ENCODE measurements at regions of chr10 and their contacts with region 1.

Region 1: DNA sequence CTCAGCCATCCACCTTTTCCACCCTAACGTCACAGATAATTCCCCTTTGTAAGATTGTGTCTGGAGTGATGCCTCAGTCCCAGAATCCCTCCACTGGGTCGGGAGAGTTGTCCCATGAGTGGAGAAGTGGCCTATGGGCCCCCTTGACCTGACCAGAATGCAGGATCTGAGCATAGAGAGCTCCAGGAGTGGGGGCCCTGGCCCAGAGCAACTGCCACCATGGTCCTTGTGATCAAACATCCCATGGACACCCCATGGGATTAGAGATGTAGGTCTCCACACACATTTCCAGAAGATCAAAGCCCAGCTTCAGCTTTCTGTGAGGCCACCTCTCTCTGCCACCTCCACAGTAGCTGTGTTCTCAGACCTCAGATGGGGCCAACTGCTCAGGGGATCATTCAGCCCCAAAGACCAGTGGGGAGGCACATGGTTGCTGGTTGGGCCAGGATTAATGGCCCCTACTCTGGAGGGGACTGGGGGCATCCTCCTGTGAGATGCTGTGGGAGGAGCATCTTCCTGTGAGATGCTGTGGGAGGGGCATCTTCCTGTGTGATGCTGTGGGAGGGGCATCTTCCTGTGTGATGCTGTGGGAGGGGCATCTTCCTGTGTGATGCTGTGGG is 28.5 kb upstream of the DPYSL4 start:
- DNase-seq: peak in 8 of 9 donors; percentile 51 to 71 (median 65)
- ATAC-seq: peak; percentile 58
- H3K4me3 ChIP-seq: no peak overlapping the region
- H3K4me3 Mint-ChIP-seq: peak overlapping the region in 4 of 10 donors; percentile 14 to 64 (median 30)
- H3K27ac ChIP-seq: peak overlapping the region; percentile 72
- H3K27ac Mint-ChIP-seq: peak overlapping the region in 8 of 9 donors; percentile 76 to 100 (median 95)
- H3K4me1 ChIP-seq: peaks cover 23 to 32% of the 10 kb centered on the region in 2 donors
- H3K4me1 Mint-ChIP-seq: peaks cover 13 to 46% (median 34%) of the 10 kb centered on the region in 7 donors
- H3K27me3 ChIP-seq: no peaks in the 10 kb centered on the region
- H3K27me3 Mint-ChIP-seq: no peaks in the 10 kb centered on the region

Region 2: GRCh38 chr10:131900350-131901146 is 257.7 kb before region 1 on chr10 and contains the start of gene PPP2R2D:
- CTCF ChIA-PET with region 1: no interaction called
- POLR2A ChIA-PET with region 1: no interaction called
- intact Hi-C with region 1: loop called (anchors 1 to 2 kb)
- DNase-seq: peak; percentile 95 to 99 (median 97)
- ATAC-seq: peak; percentile 90
- H3K4me3 ChIP-seq: peak within 1 kb of the TSS; percentile 64
- H3K4me3 Mint-ChIP-seq: peak within 1 kb of the TSS; percentile 90 to 95 (median 92)
- H3K27ac ChIP-seq: peak within 1 kb of the TSS; percentile 94
- H3K27ac Mint-ChIP-seq: peak within 1 kb of the TSS; percentile 86 to 97 (median 93)
- H3K4me1 ChIP-seq: peaks cover 34 to 40% of the 10 kb centered on the region in 2 donors
- H3K4me1 Mint-ChIP-seq: peaks cover 30 to 67% (median 61%) of the 10 kb centered on the region in 7 donors
- H3K27me3 ChIP-seq: no peaks in the 10 kb centered on the region
- H3K27me3 Mint-ChIP-seq: peaks cover 0 to 18% (median 0%) of the 10 kb centered on the region in 5 donors
- total RNA-seq, gene PPP2R2D: 37.1 to 61.3 (median 40.1) TPM

Region 3: DNA sequence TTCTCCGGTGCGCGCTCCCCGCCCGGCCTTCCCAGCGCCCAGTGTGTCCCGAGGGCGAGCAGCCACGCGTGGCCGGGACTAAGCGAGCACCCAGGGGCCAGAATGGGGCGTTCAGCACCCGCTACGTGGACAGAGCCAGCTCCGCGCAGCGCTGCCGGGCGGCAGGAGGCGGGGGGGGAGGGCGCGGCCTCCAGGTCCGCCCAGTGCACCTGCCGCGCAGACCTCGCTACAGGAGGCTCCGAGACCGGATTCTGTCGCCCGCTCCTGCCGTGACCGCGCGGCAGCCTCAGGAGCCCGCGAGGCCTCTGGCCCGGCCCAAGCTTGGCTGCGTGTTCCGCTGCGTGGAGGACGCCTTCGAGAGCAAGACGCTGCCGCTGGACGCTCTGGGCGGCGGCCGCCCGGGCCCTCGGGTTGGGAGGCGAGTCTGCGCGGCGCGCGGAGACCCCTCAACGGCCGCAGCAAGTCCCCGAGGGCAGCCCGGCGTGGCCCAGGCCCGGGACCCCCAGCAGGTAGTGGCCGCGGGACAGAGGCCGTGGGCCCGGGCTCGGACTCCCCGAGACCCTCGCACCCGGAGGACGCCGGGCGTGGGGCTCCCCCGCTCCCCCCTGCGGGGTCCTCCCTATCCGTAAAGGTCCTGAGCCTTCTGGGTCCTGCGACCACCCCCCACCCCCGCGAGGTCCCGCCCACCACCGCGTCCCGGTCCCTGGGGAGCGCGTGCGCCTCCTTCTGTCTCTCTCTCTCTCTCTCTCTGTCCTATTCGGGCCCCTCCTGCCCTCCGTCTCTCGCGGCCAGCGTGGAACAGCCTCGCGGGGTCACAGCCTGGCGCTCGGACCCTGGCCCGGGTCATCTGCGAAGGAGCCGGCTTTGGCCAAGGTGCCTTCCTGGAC is 27.6 kb after region 1 on chr10:
- CTCF ChIA-PET with region 1: no interaction called
- POLR2A ChIA-PET with region 1: interaction called, 5 read pairs
- intact Hi-C with region 1: loop called (anchors 1 kb)
- DNase-seq: peak; percentile 53 to 79 (median 66)
- ATAC-seq: peak; percentile 92
- H3K4me3 ChIP-seq: peak overlapping the region; percentile 27
- H3K4me3 Mint-ChIP-seq: peak overlapping the region; percentile 16 to 84 (median 63)
- H3K27ac ChIP-seq: peak overlapping the region; percentile 55
- H3K27ac Mint-ChIP-seq: peak overlapping the region in 3 of 9 donors; percentile 29 to 47 (median 41)
- H3K4me1 ChIP-seq: peaks cover 0 to 7% of the 10 kb centered on the region in 2 donors
- H3K4me1 Mint-ChIP-seq: peaks cover 3 to 28% (median 17%) of the 10 kb centered on the region in 7 donors
- H3K27me3 ChIP-seq: peaks cover 0 to 10% of the 10 kb centered on the region in 2 donors
- H3K27me3 Mint-ChIP-seq: peaks cover 0 to 38% (median 31%) of the 10 kb centered on the region in 5 donors

Region 4: GRCh38 chr10:133278577-133279265 is 1120.5 kb after region 1 on chr10:
- CTCF ChIA-PET with region 1: no interaction called
- POLR2A ChIA-PET with region 1: no interaction called
- intact Hi-C with region 1: loop called in 1 of 2 experiments (anchors 5 kb)
- DNase-seq: peak in 3 of 9 donors; percentile 17 to 60 (median 53)
- ATAC-seq: peak; percentile 69
- H3K4me3 ChIP-seq: peak overlapping the region; percentile 27
- H3K4me3 Mint-ChIP-seq: peak overlapping the region; percentile 50 to 84 (median 66)
- H3K27ac ChIP-seq: peak overlapping the region; percentile 50
- H3K27ac Mint-ChIP-seq: peak overlapping the region; percentile 66 to 93 (median 86)
- H3K4me1 ChIP-seq: peaks cover 22 to 34% of the 10 kb centered on the region in 2 donors
- H3K4me1 Mint-ChIP-seq: peaks cover 11 to 36% (median 21%) of the 10 kb centered on the region in 7 donors
- H3K27me3 ChIP-seq: no peaks in the 10 kb centered on the region
- H3K27me3 Mint-ChIP-seq: no peaks in the 10 kb centered on the region